Activated CD4-positive, alpha-beta T cell treated with anti-CD3 and anti-CD28 coated beads, Interleukin-2, amount 10 ng/mL, durations not matched to agents 24 days and 14 days (primary cell): ENCODE measurements at regions of chr13 and their contacts with region 1.

Region 1: DNA sequence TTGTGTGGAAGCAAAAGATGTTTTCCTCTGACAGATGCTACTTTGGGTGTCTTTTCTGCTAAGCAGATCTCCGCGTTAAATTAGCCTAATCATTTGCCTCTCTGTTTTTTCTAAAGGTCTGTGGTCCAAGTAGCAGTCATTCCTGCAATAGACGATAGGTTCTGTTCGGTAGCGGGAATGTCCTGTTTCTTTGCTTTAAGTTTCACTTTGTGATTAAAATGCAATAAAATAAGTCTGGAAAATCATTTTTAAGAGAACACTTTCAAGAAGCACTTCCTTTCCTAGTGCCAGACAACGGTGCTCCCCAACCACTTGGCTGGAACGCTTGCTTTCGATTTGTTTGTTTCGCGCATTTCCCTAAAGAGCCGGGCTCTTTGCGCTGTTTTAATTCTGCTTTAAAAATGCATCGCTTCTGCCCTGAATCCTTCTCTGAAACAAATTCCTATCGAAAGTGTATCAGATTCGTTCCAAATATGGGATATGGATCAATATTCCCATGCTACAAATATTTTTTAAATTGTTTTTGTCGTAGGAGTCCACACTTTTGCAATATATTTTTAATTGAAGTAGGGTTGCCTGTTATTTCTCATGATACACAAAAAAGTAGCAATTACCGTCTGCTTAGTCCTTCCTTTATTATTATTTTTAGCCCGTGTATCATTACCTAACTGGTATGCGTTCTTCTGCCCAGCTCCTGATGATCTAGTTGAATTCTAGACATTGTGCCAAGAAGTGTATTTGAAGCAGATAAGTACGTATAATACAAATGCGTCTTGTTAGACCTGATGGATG is 14.2 kb downstream of the ZIC2 start:
- DNase-seq: no peak
- H3K4me3 Mint-ChIP-seq: peak overlapping the region; percentile 51
- H3K27ac Mint-ChIP-seq: no peak overlapping the region
- H3K4me1 Mint-ChIP-seq: peaks cover 19% of the 10 kb centered on the region
- H3K27me3 Mint-ChIP-seq: peaks cover 75% of the 10 kb centered on the region

Region 2: DNA sequence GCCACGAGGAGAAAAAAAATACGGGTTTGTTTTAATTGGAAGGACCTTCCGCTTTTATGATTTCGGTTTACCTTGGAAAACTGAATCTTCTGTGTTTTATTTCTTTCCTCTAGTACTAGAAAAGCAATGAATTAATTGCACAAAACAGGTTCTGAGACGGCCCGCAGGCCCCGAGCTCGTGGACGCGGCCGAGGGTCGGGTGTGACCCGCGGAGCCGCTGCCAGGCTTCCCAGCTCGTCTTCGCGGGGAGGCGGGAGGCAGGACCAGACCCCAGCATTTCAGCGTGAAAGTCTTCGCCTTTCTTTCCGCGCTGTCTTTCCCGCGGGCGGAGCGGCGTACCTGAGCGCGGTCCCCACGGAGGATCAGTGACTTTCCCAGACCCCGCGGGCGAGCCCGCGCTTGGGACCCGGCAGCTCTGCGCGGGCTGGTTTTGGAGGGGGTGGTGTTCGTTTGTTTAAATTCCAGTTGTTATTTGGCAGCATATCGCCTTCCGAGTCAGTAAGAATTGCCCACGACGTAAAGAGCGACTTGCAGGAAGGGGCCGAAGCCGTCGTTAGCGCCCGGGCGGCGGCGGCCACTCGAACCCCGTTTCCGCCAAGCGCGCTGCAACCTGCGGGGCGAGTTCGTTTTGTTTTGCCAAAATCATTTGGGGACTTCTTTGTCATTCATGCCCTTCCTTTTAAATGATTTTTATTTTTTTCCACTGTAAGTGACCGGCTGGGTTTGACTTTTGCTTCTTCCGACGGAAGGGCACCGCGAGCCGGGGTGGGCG is 100.4 kb before region 1 on chr13:
- intact Hi-C with region 1: loop called (anchors 5 kb)
- DNase-seq: peak; percentile 67
- H3K4me3 Mint-ChIP-seq: peak overlapping the region; percentile 68
- H3K27ac Mint-ChIP-seq: no peak overlapping the region
- H3K4me1 Mint-ChIP-seq: peaks cover 8% of the 10 kb centered on the region
- H3K27me3 Mint-ChIP-seq: peaks cover 63% of the 10 kb centered on the region

Region 3: GRCh38 chr13:99982041-99982730 is 13.6 kb before region 1 on chr13:
- intact Hi-C with region 1: loop called (anchors 1 kb)
- DNase-seq: peak; percentile 73
- H3K4me3 Mint-ChIP-seq: no peak overlapping the region
- H3K27ac Mint-ChIP-seq: no peak overlapping the region
- H3K4me1 Mint-ChIP-seq: peaks cover 13% of the 10 kb centered on the region
- H3K27me3 Mint-ChIP-seq: peaks cover 61% of the 10 kb centered on the region

Region 4: GRCh38 chr13:100235311-100235901 is 239.6 kb after region 1 on chr13:
- intact Hi-C with region 1: loop called (anchors 5 kb)
- DNase-seq: peak; percentile 76
- H3K4me3 Mint-ChIP-seq: no peak overlapping the region
- H3K27ac Mint-ChIP-seq: no peak overlapping the region
- H3K4me1 Mint-ChIP-seq: peaks cover 7% of the 10 kb centered on the region
- H3K27me3 Mint-ChIP-seq: no peaks in the 10 kb centered on the region

Region 5: GRCh38 chr13:100506600-100507422 is 511.0 kb after region 1 on chr13:
- intact Hi-C with region 1: loop called (anchors 5 kb)
- DNase-seq: no peak
- H3K4me3 Mint-ChIP-seq: peak overlapping the region; percentile 77
- H3K27ac Mint-ChIP-seq: peak overlapping the region; percentile 85
- H3K4me1 Mint-ChIP-seq: peaks cover 20% of the 10 kb centered on the region
- H3K27me3 Mint-ChIP-seq: peaks cover 13% of the 10 kb centered on the region

Region 6: DNA sequence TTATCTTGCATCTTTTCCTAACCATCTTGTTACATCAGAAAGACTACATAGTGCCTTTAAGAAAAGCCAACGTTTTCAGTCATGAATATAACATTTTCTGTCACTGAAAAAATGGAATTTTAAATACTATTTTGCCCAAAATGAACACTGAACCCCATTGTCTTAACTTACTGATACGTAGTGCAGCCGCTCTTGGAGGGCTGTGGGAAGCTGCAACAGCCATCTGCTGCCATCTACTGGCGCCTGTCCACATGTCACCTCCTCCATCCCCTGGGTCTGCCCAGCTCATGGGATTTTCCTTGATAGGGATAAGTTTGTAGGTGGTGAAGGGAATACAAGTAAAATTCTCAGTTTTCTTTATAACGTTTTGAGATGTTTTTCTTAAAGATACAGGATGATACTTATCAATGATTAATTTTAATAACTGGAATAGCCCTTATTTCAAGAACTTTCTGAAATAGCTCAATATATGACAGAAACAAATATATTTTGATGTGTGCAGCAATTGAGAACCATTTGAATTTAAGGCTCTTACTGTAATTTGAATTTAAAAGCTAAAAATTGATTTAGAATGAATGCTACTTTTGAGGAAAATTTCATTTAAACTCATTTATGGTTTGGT is 519.1 kb after region 1 on chr13:
- intact Hi-C with region 1: loop called (anchors 2 kb)
- DNase-seq: peak; percentile 91
- H3K4me3 Mint-ChIP-seq: no peak overlapping the region
- H3K27ac Mint-ChIP-seq: no peak overlapping the region
- H3K4me1 Mint-ChIP-seq: peaks cover 14% of the 10 kb centered on the region
- H3K27me3 Mint-ChIP-seq: peaks cover 6% of the 10 kb centered on the region